ENCODE measurements at regions of chr2 and their contacts with region 1.

Region 1: GRCh38 chr2:27191053-27191829 is 20.6 kb upstream of the ATRAID start:
- DNase-seq: peak; percentile 60 to 74
- ATAC-seq: peak; percentile 96
- H3K4me3 ChIP-seq: no peak overlapping the region
- H3K27ac ChIP-seq: no peak overlapping the region
- H3K4me1 ChIP-seq: 0 out of 3 replicates have a peak, but pooled peaks cover 3% of the 10 kb centered on the region
- CTCF ChIP-seq: peak; percentile 79
- EP300 ChIP-seq: no peak
- POLR2A ChIP-seq: no peak
- RAD21 ChIP-seq: peak; percentile 79 to 83

Region 2: GRCh38 chr2:27086090-27086723 is 105.0 kb before region 1 on chr2:
- CTCF ChIA-PET with region 1: interaction called, 21 read pairs
- POLR2A ChIA-PET with region 1: no interaction called
- DNase-seq: peak; percentile 95 to 97
- ATAC-seq: peak; percentile 73 to 89
- H3K4me3 ChIP-seq: peak overlapping the region; percentile 70
- H3K27ac ChIP-seq: peak overlapping the region; percentile 90 to 91
- H3K4me1 ChIP-seq: peaks cover 17% of the 10 kb centered on the region
- CTCF ChIP-seq: peak; percentile 98
- EP300 ChIP-seq: no peak
- POLR2A ChIP-seq: peak; percentile 41; the same call in 1 of the 2 replicates
- RAD21 ChIP-seq: peak; percentile 31 to 63; a peak in 4 of 5 replicates

Region 3: GRCh38 chr2:27095745-27096651 is 95.2 kb before region 1 on chr2:
- CTCF ChIA-PET with region 1: interaction called, 81 read pairs
- POLR2A ChIA-PET with region 1: interaction called, 3 read pairs
- DNase-seq: peak; percentile 56 to 80
- ATAC-seq: peak; percentile 67 to 85
- H3K4me3 ChIP-seq: no peak overlapping the region
- H3K27ac ChIP-seq: peak overlapping the region; percentile 46 to 71; a peak in 5 of 6 replicates
- H3K4me1 ChIP-seq: peaks cover 20% of the 10 kb centered on the region
- CTCF ChIP-seq: no peak
- EP300 ChIP-seq: no peak
- POLR2A ChIP-seq: no peak
- RAD21 ChIP-seq: no peak

Region 4: GRCh38 chr2:27152786-27153510 is 38.3 kb before region 1 on chr2:
- CTCF ChIA-PET with region 1: interaction called, 10 read pairs
- POLR2A ChIA-PET with region 1: no interaction called
- DNase-seq: no peak
- ATAC-seq: peak in 1 of 2 experiments; percentile 13; a peak in 2 of 6 replicates
- H3K4me3 ChIP-seq: no peak overlapping the region
- H3K27ac ChIP-seq: no peak overlapping the region
- H3K4me1 ChIP-seq: 0 out of 3 replicates have a peak, but pooled peaks cover 8% of the 10 kb centered on the region
- CTCF ChIP-seq: no peak
- EP300 ChIP-seq: no peak
- POLR2A ChIP-seq: no peak
- RAD21 ChIP-seq: no peak

Region 5: DNA sequence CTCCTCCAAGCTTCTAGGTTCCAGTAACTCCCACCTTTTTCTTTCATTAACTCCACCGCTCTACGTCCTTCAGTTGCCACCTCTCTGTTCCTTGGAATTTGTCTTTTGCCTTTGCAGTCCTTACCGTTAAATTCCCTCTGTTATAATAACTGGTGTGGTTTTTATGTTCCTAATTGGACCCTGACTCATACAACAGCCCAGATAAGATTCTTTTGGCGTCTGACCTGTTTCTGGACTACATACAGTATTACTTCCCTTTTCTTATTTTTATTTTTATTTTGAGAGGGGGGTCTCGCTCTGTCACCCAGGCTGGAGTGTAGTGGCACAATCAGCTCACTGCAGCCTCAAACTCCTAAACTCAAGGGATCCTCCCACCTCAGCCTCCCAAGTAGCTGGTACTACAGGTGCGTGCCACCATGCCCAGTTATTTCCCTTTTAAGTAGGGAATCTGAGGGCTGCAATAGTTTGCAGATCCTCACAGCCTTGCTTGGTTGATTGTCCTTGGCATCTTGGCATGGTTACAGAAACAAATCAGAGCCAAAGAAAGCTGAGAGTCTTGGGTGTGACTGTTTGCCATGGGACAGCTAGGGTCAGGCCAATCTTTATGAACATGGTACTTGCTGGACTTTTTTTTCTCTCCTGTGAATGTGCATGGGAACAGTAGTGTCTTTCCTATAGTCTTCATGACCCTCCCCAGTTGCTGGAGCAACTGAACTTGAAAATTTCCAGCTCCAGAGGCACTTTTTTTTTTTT is 20.5 kb before region 1 on chr2:
- CTCF ChIA-PET with region 1: interaction called, 34 read pairs
- POLR2A ChIA-PET with region 1: no interaction called
- DNase-seq: no peak
- ATAC-seq: no peak
- H3K4me3 ChIP-seq: no peak overlapping the region
- H3K27ac ChIP-seq: no peak overlapping the region
- H3K4me1 ChIP-seq: no peaks in the 10 kb centered on the region
- CTCF ChIP-seq: no peak
- EP300 ChIP-seq: no peak
- POLR2A ChIP-seq: no peak
- RAD21 ChIP-seq: no peak

Region 6: DNA sequence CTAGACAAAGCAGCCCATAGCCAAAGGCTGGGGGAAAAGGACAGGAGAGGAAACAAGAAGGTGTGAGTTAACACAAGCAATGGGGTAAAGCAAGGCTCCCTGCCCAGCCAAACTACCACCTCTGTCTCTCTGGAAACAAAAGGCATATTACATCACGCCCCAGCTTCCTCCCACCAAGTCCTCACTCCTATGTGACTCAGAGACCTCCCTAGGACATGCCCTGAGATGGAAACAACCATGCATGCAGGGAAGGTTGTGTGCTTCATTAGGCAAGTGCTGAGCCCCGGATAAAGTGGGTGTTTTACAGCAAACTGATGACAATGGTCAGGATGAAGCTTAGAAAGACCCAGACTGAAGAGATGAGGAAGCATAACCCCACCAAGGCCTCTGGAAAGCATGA is 11.6 kb after region 1 on chr2:
- CTCF ChIA-PET with region 1: interaction called, 21 read pairs
- POLR2A ChIA-PET with region 1: no interaction called
- DNase-seq: no peak
- ATAC-seq: no peak
- H3K4me3 ChIP-seq: no peak overlapping the region
- H3K27ac ChIP-seq: no peak overlapping the region
- H3K4me1 ChIP-seq: no peaks in the 10 kb centered on the region
- CTCF ChIP-seq: no peak
- EP300 ChIP-seq: no peak
- POLR2A ChIP-seq: no peak
- RAD21 ChIP-seq: no peak

Region 7: DNA sequence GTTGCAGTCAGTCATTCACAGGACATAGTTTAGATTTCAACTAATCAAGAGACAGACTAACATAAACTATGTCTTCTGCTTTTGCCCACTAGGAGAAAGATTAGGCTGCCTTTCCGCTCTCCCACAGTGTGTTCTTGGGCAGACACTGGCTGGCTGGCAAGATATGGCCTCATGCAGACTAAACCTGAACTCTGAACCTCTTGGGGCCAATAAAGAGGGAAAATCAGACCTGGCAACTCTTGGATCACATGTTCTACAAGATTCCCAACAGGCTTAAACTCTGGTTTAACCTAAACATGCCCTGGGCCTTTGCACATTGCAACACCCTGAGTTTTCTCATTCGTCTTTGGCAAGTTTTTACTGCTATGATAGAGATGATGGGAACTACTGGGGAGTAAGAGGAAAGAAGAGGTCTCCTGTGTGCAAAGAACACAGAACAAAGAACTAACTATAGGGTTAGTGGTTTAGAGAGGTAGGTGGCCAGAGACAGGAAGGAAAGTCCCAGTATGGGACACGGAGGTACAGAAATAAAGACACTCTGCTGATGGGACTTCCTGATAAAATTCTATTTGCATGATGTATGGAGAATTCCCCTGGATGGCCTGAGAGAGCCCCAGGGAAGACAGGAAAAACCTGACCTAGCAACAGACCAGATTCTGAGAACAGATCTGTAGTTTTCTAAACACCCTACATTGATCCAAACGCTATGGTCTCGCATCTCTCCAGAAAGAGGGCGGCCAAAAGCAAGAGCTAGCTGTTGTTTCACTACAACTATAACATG is 18.6 kb after region 1 on chr2:
- CTCF ChIA-PET with region 1: interaction called, 12 read pairs
- POLR2A ChIA-PET with region 1: interaction called, 4 read pairs
- DNase-seq: no peak
- ATAC-seq: no peak
- H3K4me3 ChIP-seq: no peak overlapping the region
- H3K27ac ChIP-seq: no peak overlapping the region
- H3K4me1 ChIP-seq: peaks cover 10% of the 10 kb centered on the region; the same call in 2 of the 3 replicates
- CTCF ChIP-seq: no peak
- EP300 ChIP-seq: no peak
- POLR2A ChIP-seq: no peak
- RAD21 ChIP-seq: no peak

Measured in A549 (cell line).